Activated B cell treated with CpG ODN at 0.5 μM for 24 hours (primary cell): ENCODE measurements at regions of chr6 and their contacts with region 1.

Region 1: DNA sequence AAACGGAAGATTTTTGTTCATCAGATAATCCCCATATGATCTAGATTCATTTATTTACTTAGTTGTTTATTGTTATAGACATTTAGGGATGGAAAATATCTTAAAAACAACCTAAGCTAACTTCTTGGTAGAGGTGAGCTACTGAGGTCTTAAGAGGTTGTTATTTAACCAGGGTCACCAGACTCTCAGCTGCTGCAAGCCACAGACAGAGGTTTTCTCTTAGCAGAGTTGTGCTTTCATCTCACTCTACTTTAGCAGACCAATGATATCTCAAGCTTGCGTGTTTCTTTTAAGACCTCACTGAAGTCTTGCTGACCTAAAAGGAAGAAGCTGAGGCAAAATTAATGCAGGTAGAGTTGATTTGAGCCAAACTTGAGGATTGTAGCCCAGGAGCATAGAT is 43.6 kb downstream of the NCOA7 start:
- DNase-seq: no peak
- ATAC-seq: no peak
- H3K4me3 Mint-ChIP-seq: no peak overlapping the region
- H3K27ac Mint-ChIP-seq: no peak overlapping the region
- H3K4me1 Mint-ChIP-seq: peaks cover 29% of the 10 kb centered on the region
- H3K27me3 Mint-ChIP-seq: no peaks in the 10 kb centered on the region
- CTCF ChIP-seq: no peak

Region 2: DNA sequence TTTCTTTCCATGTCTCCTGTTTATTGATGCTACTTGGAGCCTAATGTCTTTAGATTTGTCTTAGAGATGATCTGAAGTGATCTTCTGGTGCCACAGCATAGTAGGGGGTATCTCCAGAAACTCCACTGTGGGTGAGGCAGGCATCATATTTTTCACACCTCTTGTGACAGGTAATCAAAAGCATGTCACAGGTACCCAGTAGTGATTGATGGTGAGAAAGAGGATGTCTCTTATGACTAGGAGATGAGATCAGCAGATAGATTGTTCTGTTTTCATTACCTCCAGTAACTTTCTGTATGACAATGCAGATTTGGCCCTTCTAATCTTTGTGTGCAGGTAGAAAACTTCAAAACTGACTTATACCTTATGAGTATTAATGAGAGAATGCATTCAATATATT is 30.1 kb before region 1 on chr6:
- CTCF ChIA-PET with region 1: no interaction called
- POLR2A ChIA-PET with region 1: no interaction called
- intact Hi-C with region 1: loop called (anchors 2 kb)
- DNase-seq: no peak
- ATAC-seq: no peak
- H3K4me3 Mint-ChIP-seq: no peak overlapping the region
- H3K27ac Mint-ChIP-seq: no peak overlapping the region
- H3K4me1 Mint-ChIP-seq: peaks cover 68% of the 10 kb centered on the region
- H3K27me3 Mint-ChIP-seq: no peaks in the 10 kb centered on the region
- CTCF ChIP-seq: no peak

Region 3: DNA sequence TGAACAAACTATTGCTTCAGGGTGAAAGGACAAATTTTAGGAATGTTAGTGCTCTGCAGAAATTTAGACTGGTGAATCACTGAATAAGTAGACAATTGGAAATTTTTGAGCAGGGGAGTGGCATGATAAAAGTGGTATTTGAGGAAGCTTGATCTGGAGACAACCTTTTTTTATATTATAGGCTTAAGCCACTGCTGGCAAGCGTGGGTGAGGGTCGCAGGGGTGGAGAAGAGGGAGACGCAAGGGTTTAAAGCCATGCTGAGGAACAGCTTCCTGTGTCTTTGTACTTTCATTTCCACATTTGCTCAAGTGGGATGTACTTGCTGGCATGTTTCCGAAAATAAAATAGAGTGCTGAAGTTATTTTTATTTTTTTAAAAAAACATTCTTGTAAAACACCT is 19.9 kb before region 1 on chr6:
- CTCF ChIA-PET with region 1: no interaction called
- POLR2A ChIA-PET with region 1: no interaction called
- intact Hi-C with region 1: loop called (anchors 2 kb)
- DNase-seq: no peak
- ATAC-seq: peak; percentile 49
- H3K4me3 Mint-ChIP-seq: peak overlapping the region; percentile 29
- H3K27ac Mint-ChIP-seq: peak overlapping the region; percentile 26
- H3K4me1 Mint-ChIP-seq: peaks cover 73% of the 10 kb centered on the region
- H3K27me3 Mint-ChIP-seq: no peaks in the 10 kb centered on the region
- CTCF ChIP-seq: no peak

Region 4: GRCh38 chr6:125858427-125859320 is 24.3 kb after region 1 on chr6:
- CTCF ChIA-PET with region 1: no interaction called
- POLR2A ChIA-PET with region 1: no interaction called
- intact Hi-C with region 1: loop called (anchors 2 kb)
- DNase-seq: no peak
- ATAC-seq: peak; percentile 45
- H3K4me3 Mint-ChIP-seq: no peak overlapping the region
- H3K27ac Mint-ChIP-seq: no peak overlapping the region
- H3K4me1 Mint-ChIP-seq: no peaks in the 10 kb centered on the region
- H3K27me3 Mint-ChIP-seq: no peaks in the 10 kb centered on the region
- CTCF ChIP-seq: no peak